GM12878 (cell line): ENCODE measurements at regions of chr16 and their contacts with region 1.

Region 1: GRCh38 chr16:9957002-9957401 is 225.2 kb downstream of the GRIN2A start:
- DNase-seq: no peak
- ATAC-seq: peak; percentile 34
- H3K4me3 ChIP-seq: no peak overlapping the region
- H3K27ac ChIP-seq: no peak overlapping the region
- H3K4me1 ChIP-seq: no peaks in the 10 kb centered on the region
- H3K27me3 ChIP-seq: no peaks in the 10 kb centered on the region
- CTCF ChIP-seq: no peak
- EP300 ChIP-seq: no peak
- POLR2A ChIP-seq: no peak
- RAD21 ChIP-seq: no peak

Region 2: GRCh38 chr16:9687737-9688319 is 269.2 kb before region 1 on chr16:
- CTCF ChIA-PET with region 1: no interaction called
- POLR2A ChIA-PET with region 1: no interaction called
- RAD21 ChIA-PET with region 1: no interaction called
- SMC1A ChIA-PET with region 1: no interaction called
- in situ Hi-C with region 1: no loop called
- intact Hi-C with region 1: no loop called
- DNase-seq: no peak
- ATAC-seq: no peak
- H3K4me3 ChIP-seq: no peak overlapping the region
- H3K27ac ChIP-seq: no peak overlapping the region
- H3K4me1 ChIP-seq: no peaks in the 10 kb centered on the region
- H3K27me3 ChIP-seq: no peaks in the 10 kb centered on the region
- CTCF ChIP-seq: no peak
- EP300 ChIP-seq: no peak
- POLR2A ChIP-seq: no peak
- RAD21 ChIP-seq: no peak

Region 3: DNA sequence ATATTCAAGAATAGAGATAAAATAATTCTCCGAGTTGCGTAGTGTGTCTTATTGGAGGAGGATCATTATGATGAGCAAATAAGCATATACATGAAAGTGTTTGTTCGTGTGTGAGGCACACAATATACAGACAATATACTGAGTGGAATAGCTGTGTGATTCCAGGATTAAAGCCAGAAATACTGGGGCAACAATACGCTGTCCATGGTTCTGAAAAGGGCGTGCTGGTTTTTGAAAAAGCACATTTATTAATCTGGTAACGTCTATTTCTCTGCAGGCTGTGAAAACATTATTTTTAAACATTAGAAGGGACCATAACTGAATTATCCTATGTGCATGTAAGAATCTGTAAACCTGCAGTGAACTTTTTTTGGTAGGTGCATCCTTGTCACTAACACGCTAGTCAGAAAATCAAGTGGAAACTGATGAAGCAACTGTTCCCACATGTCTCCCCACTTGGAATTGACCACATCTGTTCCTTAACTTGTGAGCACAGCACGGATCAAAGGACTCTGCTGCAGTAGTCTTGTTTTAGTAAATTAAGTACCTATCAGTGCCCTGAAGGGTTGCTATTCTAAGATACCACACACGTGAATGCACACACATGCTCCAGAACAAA is 120.8 kb before region 1 on chr16:
- CTCF ChIA-PET with region 1: no interaction called
- POLR2A ChIA-PET with region 1: interaction called, 3 read pairs
- RAD21 ChIA-PET with region 1: interaction called, 10 read pairs
- SMC1A ChIA-PET with region 1: interaction called, 8 read pairs
- in situ Hi-C with region 1: no loop called
- intact Hi-C with region 1: no loop called
- DNase-seq: no peak
- ATAC-seq: no peak
- H3K4me3 ChIP-seq: no peak overlapping the region
- H3K27ac ChIP-seq: no peak overlapping the region
- H3K4me1 ChIP-seq: peaks cover 4% of the 10 kb centered on the region; the same call in 1 of the 2 replicates
- H3K27me3 ChIP-seq: no peaks in the 10 kb centered on the region
- CTCF ChIP-seq: no peak
- EP300 ChIP-seq: no peak
- POLR2A ChIP-seq: no peak
- RAD21 ChIP-seq: no peak

Region 4: GRCh38 chr16:9908613-9909012 is 48.4 kb before region 1 on chr16:
- CTCF ChIA-PET with region 1: interaction called, 3 read pairs
- POLR2A ChIA-PET with region 1: interaction called, 3 read pairs
- RAD21 ChIA-PET with region 1: interaction called, 28 read pairs
- SMC1A ChIA-PET with region 1: interaction called, 15 read pairs
- in situ Hi-C with region 1: no loop called
- intact Hi-C with region 1: loop called (anchors 5 kb)
- DNase-seq: no peak
- ATAC-seq: peak; percentile 21
- H3K4me3 ChIP-seq: no peak overlapping the region
- H3K27ac ChIP-seq: peak overlapping the region; percentile 27
- H3K4me1 ChIP-seq: peaks cover 16% of the 10 kb centered on the region
- H3K27me3 ChIP-seq: no peaks in the 10 kb centered on the region
- CTCF ChIP-seq: no peak
- EP300 ChIP-seq: no peak
- POLR2A ChIP-seq: no peak
- RAD21 ChIP-seq: no peak

Region 5: GRCh38 chr16:9913604-9914326 is 43.2 kb before region 1 on chr16:
- CTCF ChIA-PET with region 1: interaction called, 4 read pairs
- POLR2A ChIA-PET with region 1: interaction called, 3 read pairs
- RAD21 ChIA-PET with region 1: interaction called, 28 read pairs
- SMC1A ChIA-PET with region 1: interaction called, 15 read pairs
- in situ Hi-C with region 1: no loop called
- intact Hi-C with region 1: loop called (anchors 5 kb)
- DNase-seq: no peak
- ATAC-seq: no peak; the same call in 2 of the 3 replicates
- H3K4me3 ChIP-seq: no peak overlapping the region
- H3K27ac ChIP-seq: peak overlapping the region; percentile 63
- H3K4me1 ChIP-seq: peaks cover 17% of the 10 kb centered on the region
- H3K27me3 ChIP-seq: no peaks in the 10 kb centered on the region
- CTCF ChIP-seq: no peak
- EP300 ChIP-seq: no peak
- POLR2A ChIP-seq: no peak
- RAD21 ChIP-seq: no peak

Region 6: GRCh38 chr16:9929313-9929712 is 27.7 kb before region 1 on chr16:
- CTCF ChIA-PET with region 1: interaction called, 5 read pairs
- POLR2A ChIA-PET with region 1: interaction called, 3 read pairs
- RAD21 ChIA-PET with region 1: interaction called, 21 read pairs
- SMC1A ChIA-PET with region 1: interaction called, 27 read pairs
- in situ Hi-C with region 1: no loop called
- intact Hi-C with region 1: no loop called
- DNase-seq: peak; percentile 52
- ATAC-seq: peak; percentile 98
- H3K4me3 ChIP-seq: no peak overlapping the region
- H3K27ac ChIP-seq: no peak overlapping the region
- H3K4me1 ChIP-seq: peaks cover 9% of the 10 kb centered on the region
- H3K27me3 ChIP-seq: no peaks in the 10 kb centered on the region
- CTCF ChIP-seq: no peak
- EP300 ChIP-seq: peak; percentile 33 to 80; a peak in 2 of 4 replicates
- POLR2A ChIP-seq: no peak
- RAD21 ChIP-seq: no peak

Region 7: DNA sequence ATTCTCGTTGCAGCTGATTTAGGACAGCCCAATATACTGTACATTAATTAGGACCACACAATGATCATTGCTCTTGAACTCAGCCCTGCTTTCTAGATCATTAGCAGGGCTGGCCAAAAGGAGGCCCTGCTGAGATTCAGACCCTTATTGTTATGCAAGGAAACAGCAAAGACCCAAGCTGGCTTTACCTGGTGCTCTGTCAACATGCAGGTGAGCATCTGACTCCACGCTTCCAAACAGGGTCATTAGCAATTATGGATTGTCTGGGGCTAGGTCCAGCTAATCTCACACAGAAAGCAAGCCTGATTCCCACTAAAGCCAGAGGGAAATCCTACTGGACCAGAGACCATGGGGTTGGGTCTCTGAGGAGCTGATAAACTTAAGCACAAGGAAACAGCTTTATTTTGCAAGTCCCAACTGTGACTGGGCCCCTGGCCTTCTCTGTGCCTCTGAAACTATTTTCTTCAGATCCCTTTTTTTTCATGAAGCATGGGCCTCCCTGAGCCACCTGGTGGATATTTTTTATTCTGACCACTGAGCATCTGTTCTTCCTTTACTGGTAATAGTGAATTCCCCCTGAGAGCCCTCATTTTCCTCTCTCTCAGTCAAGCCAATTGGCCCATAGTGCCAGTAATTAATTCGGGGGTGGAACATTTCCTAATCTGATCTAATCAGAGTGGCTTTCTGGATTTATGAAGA is 10.8 kb before region 1 on chr16:
- CTCF ChIA-PET with region 1: interaction called, 13 read pairs
- POLR2A ChIA-PET with region 1: no interaction called
- RAD21 ChIA-PET with region 1: interaction called, 16 read pairs
- SMC1A ChIA-PET with region 1: interaction called, 34 read pairs
- in situ Hi-C with region 1: no loop called
- intact Hi-C with region 1: no loop called
- DNase-seq: no peak
- ATAC-seq: peak; percentile 77
- H3K4me3 ChIP-seq: no peak overlapping the region
- H3K27ac ChIP-seq: no peak overlapping the region
- H3K4me1 ChIP-seq: no peaks in the 10 kb centered on the region
- H3K27me3 ChIP-seq: no peaks in the 10 kb centered on the region
- CTCF ChIP-seq: peak; percentile 29 to 34 (median 31); a peak in 4 of 6 replicates
- EP300 ChIP-seq: no peak
- POLR2A ChIP-seq: no peak
- RAD21 ChIP-seq: peak; percentile 66

Region 8: GRCh38 chr16:9976601-9977000 is 19.6 kb after region 1 on chr16:
- CTCF ChIA-PET with region 1: interaction called, 9 read pairs
- POLR2A ChIA-PET with region 1: interaction called, 3 read pairs
- RAD21 ChIA-PET with region 1: interaction called, 4 read pairs
- SMC1A ChIA-PET with region 1: interaction called, 28 read pairs
- in situ Hi-C with region 1: no loop called
- intact Hi-C with region 1: no loop called
- DNase-seq: no peak
- ATAC-seq: no peak
- H3K4me3 ChIP-seq: no peak overlapping the region
- H3K27ac ChIP-seq: no peak overlapping the region
- H3K4me1 ChIP-seq: no peaks in the 10 kb centered on the region
- H3K27me3 ChIP-seq: no peaks in the 10 kb centered on the region
- CTCF ChIP-seq: no peak
- EP300 ChIP-seq: no peak
- POLR2A ChIP-seq: no peak
- RAD21 ChIP-seq: no peak